MCF 10A (cell line): ENCODE measurements at regions of chr2 and their contacts with region 1.

Region 1: DNA sequence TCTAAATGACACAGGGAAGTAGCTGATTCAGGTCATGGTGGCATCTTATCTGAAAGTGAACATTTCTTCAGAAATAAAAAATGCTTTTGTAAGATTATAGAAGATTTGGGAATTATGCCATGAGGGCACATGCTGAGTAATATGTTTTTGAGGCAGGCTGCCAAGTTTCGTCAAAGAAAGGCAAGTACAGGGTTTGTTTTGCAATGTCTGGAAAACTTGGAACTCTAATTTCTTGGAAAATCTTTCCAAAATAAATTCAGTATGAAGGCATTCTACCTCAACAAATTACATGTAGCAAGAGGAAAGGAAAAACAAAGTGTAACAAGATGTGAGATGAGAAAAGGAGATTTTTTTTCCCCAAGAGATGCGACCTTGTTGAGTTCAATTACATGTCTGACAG is 167.7 kb downstream of the PLCL1 start:
- DNase-seq: peak; percentile 93
- H3K4me3 Mint-ChIP-seq: peak overlapping the region; percentile 2
- H3K27ac Mint-ChIP-seq: peak overlapping the region; percentile 8
- H3K4me1 Mint-ChIP-seq: peaks cover 35% of the 10 kb centered on the region
- H3K27me3 Mint-ChIP-seq: no peaks in the 10 kb centered on the region
- CTCF ChIP-seq: no peak

Region 2: DNA sequence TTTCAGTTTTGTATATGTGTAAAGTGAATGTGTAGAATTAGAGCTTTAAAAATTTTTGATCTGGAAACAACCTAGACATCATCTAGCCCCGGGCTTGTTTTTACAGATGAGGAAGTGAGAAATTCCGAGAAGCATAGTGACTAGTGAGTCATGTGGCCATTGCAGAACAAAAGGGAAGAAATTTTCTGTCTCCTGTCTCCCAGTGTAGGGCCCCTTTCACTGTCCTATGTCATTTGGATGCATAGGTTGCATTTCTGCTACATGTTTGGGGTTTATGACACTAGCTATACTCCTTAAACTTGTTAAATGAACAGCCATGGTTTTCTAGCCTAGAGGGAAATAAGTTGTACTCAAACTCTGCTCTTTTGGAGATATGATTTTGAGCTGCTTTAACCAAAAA is 83.0 kb before region 1 on chr2:
- CTCF ChIA-PET with region 1: no interaction called
- POLR2A ChIA-PET with region 1: no interaction called
- intact Hi-C with region 1: loop called (anchors 10 kb)
- DNase-seq: peak; percentile 62
- H3K4me3 Mint-ChIP-seq: no peak overlapping the region
- H3K27ac Mint-ChIP-seq: peak overlapping the region; percentile 40
- H3K4me1 Mint-ChIP-seq: peaks cover 13% of the 10 kb centered on the region
- H3K27me3 Mint-ChIP-seq: no peaks in the 10 kb centered on the region
- CTCF ChIP-seq: no peak

Region 3: GRCh38 chr2:197950754-197951153 is 21.3 kb before region 1 on chr2:
- CTCF ChIA-PET with region 1: interaction called, 3 read pairs
- POLR2A ChIA-PET with region 1: interaction called, 11 read pairs
- intact Hi-C with region 1: no loop called
- DNase-seq: peak; percentile 87
- H3K4me3 Mint-ChIP-seq: no peak overlapping the region
- H3K27ac Mint-ChIP-seq: peak overlapping the region; percentile 69
- H3K4me1 Mint-ChIP-seq: peaks cover 28% of the 10 kb centered on the region
- H3K27me3 Mint-ChIP-seq: peaks cover 11% of the 10 kb centered on the region
- CTCF ChIP-seq: no peak

Region 4: GRCh38 chr2:198717451-198717850 is 745.4 kb after region 1 on chr2:
- CTCF ChIA-PET with region 1: no interaction called
- POLR2A ChIA-PET with region 1: no interaction called
- intact Hi-C with region 1: no loop called
- DNase-seq: no peak
- H3K4me3 Mint-ChIP-seq: no peak overlapping the region
- H3K27ac Mint-ChIP-seq: no peak overlapping the region
- H3K4me1 Mint-ChIP-seq: no peaks in the 10 kb centered on the region
- H3K27me3 Mint-ChIP-seq: peaks cover 68% of the 10 kb centered on the region
- CTCF ChIP-seq: no peak